Calu3 (cell line): ENCODE measurements at regions of chrX and their contacts with region 1.

Region 1: DNA sequence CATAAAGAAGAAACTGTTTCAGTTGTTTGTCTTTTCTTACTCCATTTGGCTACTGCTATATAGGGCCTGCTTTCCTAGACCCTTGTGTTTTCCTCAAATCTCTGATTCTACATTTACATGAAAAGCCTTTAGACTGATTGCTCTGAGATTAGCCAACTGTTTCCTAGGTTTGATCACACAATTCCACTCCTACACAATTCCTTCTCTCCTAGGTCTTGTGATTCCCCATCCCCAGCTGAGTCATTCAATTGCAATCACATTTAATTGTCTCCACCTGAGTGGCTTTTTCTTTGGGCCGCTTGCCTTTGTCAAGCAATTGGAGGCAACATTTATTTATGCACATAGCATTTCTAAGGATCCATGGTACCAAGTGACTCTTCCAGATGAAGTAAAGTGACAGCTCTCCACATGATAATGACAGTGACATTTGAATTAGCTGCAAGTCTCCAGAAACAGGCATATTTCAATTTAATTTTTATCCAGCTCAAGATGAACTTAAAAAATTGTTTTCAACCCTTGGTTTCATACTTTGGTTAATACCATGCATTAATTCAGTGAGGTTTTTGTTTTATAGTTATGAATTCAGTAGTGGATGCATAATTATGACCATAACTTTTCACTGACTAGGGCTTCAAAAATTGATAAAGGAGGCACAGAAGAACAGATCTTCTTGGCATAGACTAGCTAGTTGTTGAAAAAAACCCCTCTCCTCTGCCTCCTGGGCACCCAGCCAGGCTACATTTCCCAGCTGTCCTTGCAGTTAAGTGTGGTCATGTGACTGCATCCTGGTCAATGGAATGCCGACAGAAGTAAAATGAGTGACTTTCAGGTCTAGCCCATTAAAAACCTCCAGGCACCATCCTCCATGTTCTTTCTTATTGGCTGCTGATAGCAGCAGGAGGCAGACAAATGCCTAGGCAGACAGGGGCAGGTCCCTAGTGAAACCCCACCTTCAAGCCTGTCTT is 35.6 kb downstream of the ATXN3L start:
- DNase-seq: no peak
- H3K4me3 Mint-ChIP-seq: no peak overlapping the region
- H3K27ac Mint-ChIP-seq: peak overlapping the region; percentile 90
- H3K4me1 Mint-ChIP-seq: peaks cover 47% of the 10 kb centered on the region
- H3K27me3 Mint-ChIP-seq: no peaks in the 10 kb centered on the region
- CTCF ChIP-seq: no peak

Region 2: DNA sequence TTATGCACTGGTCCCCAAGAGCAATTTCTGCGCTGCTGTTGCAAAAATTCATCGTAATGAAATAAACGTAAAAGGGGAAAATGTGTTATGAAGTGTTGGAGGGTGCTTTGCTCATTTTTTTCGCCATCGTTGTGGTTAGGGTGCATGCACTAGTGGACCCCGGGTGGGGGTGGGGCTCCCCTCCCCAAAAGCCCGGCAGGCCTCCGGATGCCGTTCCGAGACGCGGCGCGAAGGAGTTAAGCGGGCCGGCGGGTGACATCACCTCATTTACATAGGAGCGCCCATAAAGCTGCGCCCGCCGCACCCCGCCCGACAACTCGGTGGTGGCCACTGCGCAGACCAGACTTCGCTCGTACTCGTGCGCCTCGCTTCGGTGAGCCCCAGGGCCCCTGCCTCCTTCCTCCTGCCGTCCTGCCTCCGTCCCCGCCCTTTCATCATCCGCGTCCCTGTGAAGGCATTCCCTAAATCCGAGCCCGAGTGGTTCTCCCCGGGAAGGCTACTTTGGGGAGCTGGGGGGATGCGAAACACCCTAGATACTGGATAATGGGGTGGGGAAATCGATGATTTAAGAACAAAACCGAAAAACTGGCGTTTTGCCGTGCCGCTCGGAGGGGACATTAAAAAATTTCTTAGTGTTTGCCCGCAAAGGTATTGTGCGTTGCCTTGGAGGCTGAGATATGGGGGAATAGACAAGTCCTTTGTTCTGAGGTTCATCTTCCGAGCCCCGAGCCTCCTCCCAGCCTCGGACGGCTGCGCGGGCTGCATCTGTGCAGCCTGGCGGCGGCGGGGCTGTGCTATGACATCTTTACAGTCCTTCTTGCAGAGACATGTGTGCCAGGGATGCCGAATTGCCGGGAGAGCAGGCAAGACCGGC is 309.2 kb before region 1 on chrX and contains the start of gene TMSB4X:
- CTCF ChIA-PET with region 1: no interaction called
- intact Hi-C with region 1: loop called (anchors 10 kb)
- DNase-seq: peak; percentile 90
- H3K4me3 Mint-ChIP-seq: peak within 1 kb of the TSS; percentile 85
- H3K27ac Mint-ChIP-seq: peak within 1 kb of the TSS; percentile 99
- H3K4me1 Mint-ChIP-seq: peaks cover 59% of the 10 kb centered on the region
- H3K27me3 Mint-ChIP-seq: no peaks in the 10 kb centered on the region
- CTCF ChIP-seq: no peak
- total RNA-seq, gene TMSB4X: 5,274 and 5,368 TPM in 2 replicates

Region 3: DNA sequence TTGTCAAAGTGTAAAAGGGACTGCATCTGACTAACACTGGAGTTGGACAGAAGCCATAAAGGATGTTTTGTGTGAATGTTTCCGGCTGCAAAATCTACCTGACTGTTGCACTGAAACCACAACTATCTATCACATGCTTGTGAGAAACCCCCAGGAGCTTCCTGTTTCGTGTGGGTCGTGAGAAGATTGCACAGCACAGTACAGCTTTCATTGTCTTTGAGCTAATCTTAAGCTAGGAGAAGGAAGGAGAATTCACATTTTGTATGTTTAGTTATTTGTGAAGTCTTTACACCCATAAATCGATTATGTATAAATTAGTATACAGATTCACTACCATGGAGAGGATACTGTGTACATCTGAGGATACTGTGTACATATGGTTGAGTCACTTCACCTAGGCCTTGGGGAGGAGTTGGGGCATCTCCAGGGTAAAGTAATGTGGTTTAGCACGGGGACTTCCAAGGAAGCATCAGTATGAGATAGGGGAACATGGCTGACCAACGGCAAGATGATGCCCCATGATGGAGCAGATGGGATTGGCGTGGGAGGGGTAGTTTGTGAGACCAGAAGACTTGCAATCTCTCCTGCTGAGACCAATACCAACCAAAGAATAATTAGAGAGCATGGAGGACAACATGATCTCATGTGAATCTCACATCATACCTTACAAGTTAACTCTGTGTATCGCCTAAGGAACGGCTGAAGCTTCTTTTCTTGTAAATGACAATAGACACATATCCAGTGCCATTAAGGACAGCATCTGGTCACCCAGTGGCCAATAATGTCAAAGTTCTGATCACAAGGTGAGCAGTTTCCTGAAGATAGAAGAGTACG is 196.7 kb before region 1 on chrX:
- CTCF ChIA-PET with region 1: no interaction called
- intact Hi-C with region 1: loop called (anchors 10 kb)
- DNase-seq: peak; percentile 50
- H3K4me3 Mint-ChIP-seq: no peak overlapping the region
- H3K27ac Mint-ChIP-seq: peak overlapping the region; percentile 95
- H3K4me1 Mint-ChIP-seq: peaks cover 25% of the 10 kb centered on the region
- H3K27me3 Mint-ChIP-seq: no peaks in the 10 kb centered on the region
- CTCF ChIP-seq: no peak

Region 4: DNA sequence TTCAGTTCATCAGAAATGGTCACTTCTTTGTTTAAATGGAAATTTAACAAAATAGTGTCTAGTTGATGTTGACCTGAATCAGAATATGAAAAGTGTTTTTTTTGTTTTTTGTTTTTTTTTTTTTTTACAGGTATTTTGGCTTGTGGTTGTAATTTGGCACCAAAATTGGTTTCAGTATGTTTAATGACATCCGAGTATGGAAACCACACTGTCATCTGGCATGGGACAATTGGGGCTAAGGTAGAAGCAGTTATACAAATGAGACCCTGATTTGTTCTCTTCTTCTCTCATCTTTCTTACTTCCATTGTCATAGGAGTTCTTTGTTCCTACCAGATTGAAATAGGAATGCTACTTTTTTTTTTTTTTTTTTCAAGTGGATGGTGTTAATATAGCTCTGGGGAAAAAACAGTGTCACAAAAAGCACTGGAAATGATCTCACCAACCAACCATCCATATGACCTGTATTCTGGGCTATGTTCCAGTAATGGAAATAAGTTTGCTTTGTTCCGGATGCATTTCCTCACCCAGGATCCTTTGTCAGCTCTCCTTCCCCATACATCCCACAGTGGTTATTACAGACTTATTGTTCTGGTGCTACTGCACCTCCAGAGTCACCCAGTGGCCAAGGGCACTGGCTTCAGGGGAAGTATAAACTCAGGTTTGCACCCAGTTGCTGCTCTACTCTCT is 60.2 kb before region 1 on chrX:
- CTCF ChIA-PET with region 1: no interaction called
- intact Hi-C with region 1: loop called (anchors 5 kb)
- DNase-seq: peak; percentile 50
- H3K4me3 Mint-ChIP-seq: peak overlapping the region; percentile 21
- H3K27ac Mint-ChIP-seq: peak overlapping the region; percentile 92
- H3K4me1 Mint-ChIP-seq: peaks cover 54% of the 10 kb centered on the region
- H3K27me3 Mint-ChIP-seq: no peaks in the 10 kb centered on the region
- CTCF ChIP-seq: no peak

Region 5: GRCh38 chrX:13778916-13779315 is 494.7 kb after region 1 on chrX:
- CTCF ChIA-PET with region 1: no interaction called
- intact Hi-C with region 1: no loop called
- DNase-seq: no peak
- H3K4me3 Mint-ChIP-seq: no peak overlapping the region
- H3K27ac Mint-ChIP-seq: no peak overlapping the region
- H3K4me1 Mint-ChIP-seq: peaks cover under 1% of the 10 kb centered on the region
- H3K27me3 Mint-ChIP-seq: no peaks in the 10 kb centered on the region
- CTCF ChIP-seq: no peak